H1 (cell line): ENCODE measurements at regions of chr12 and their contacts with region 1.

Region 1: DNA sequence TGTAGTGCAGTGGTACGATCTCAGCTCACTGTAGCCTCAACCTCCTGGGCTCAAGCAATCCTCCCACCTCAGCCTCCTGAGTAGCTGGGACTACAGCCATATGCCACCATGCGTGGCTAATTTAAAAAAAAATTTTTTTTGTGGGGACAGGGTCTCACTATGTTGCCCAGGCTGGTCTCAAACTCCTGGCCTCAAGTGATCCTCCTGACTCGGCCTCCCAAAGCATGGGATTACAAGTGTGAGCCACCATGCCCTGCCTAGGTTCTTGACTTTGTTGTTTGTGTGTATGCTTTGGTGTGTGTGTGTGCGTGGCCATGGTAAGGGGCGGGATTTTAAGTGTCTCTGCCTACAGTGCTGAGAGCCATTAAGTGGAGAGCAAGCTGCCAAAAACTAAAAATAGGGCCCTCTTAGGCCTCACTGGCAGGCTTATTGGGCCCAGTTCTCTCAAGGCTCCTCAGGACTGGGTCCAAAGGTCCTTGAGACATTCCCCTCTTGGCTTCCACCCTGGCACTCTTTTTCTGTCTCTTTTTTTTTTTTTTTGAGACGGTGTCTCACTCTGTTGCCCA is 5.1 kb downstream of the COX14 start:
- DNase-seq: no peak
- H3K4me3 ChIP-seq: no peak overlapping the region
- H3K27ac ChIP-seq: no peak overlapping the region
- H3K4me1 ChIP-seq: no peaks in the 10 kb centered on the region
- H3K27me3 ChIP-seq: no peaks in the 10 kb centered on the region
- CTCF ChIP-seq: no peak
- EP300 ChIP-seq: no peak
- POLR2A ChIP-seq: no peak
- RAD21 ChIP-seq: no peak

Region 2: DNA sequence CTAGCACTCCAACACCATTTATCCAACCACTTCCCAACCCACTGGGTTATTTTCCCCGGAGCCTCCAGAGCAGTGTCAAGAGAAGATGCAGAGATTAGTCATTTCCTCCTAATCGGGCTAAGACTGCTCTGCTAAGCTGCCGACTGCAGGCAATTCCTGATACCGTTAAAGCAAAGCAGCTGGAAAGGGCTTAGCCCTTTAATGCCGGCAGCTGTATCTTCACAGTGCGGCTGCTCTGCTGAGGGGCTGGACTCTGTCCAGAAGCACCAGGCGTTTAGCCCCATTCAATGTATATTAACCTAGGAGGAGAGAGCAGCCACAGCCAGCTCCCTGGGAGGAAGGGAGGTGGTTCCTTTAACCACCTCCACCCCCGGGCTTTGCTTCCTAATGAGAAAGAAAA is 133.2 kb before region 1 on chr12:
- CTCF ChIA-PET with region 1: no interaction called
- POLR2A ChIA-PET with region 1: no interaction called
- DNase-seq: no peak
- H3K4me3 ChIP-seq: no peak overlapping the region
- H3K27ac ChIP-seq: no peak overlapping the region
- H3K4me1 ChIP-seq: peaks cover 3 to 11% (median 7%) of the 10 kb centered on the region in 4 experiments
- H3K27me3 ChIP-seq: no peaks in the 10 kb centered on the region
- CTCF ChIP-seq: no peak
- EP300 ChIP-seq: no peak
- POLR2A ChIP-seq: no peak
- RAD21 ChIP-seq: no peak

Region 3: GRCh38 chr12:50062728-50063460 is 54.2 kb before region 1 on chr12:
- CTCF ChIA-PET with region 1: no interaction called
- POLR2A ChIA-PET with region 1: no interaction called
- DNase-seq: no peak
- H3K4me3 ChIP-seq: no peak overlapping the region
- H3K27ac ChIP-seq: no peak overlapping the region
- H3K4me1 ChIP-seq: peaks cover 0 to 5% (median 0%) of the 10 kb centered on the region in 4 experiments; a peak in 1 of 7 replicates
- H3K27me3 ChIP-seq: peaks cover 9 to 38% (median 21%) of the 10 kb centered on the region in 4 experiments
- CTCF ChIP-seq: peak in 2 of 3 experiments; percentile 17 to 20; a peak in 2 of 4 replicates
- EP300 ChIP-seq: no peak
- POLR2A ChIP-seq: no peak
- RAD21 ChIP-seq: no peak

Region 4: DNA sequence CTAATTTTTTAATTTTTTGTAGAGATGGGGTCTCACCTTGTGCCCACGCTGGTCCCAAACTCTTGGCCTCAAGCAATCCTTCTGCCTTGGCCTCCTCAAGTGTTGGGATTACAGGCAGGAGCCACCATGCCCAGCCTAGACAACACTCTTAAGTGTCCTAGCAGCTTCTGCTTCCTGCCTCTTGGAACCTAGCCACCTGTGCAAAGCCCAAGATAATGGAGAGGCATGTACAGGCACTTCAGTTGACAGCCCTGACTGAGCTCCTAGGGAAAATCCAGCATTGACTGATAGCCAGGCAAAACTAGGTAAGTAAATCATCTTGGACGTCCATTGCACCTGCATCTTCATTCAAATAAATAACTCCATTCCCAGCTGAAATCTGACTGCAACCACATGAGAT is 10.4 kb after region 1 on chr12:
- CTCF ChIA-PET with region 1: interaction called, 28 read pairs
- POLR2A ChIA-PET with region 1: interaction called, 17 read pairs
- DNase-seq: no peak
- H3K4me3 ChIP-seq: no peak overlapping the region
- H3K27ac ChIP-seq: no peak overlapping the region
- H3K4me1 ChIP-seq: no peaks in the 10 kb centered on the region
- H3K27me3 ChIP-seq: no peaks in the 10 kb centered on the region
- CTCF ChIP-seq: no peak
- EP300 ChIP-seq: no peak
- POLR2A ChIP-seq: no peak
- RAD21 ChIP-seq: no peak